Panc1 (cell line): ENCODE measurements at regions of chr2 and their contacts with region 1.

Region 1: DNA sequence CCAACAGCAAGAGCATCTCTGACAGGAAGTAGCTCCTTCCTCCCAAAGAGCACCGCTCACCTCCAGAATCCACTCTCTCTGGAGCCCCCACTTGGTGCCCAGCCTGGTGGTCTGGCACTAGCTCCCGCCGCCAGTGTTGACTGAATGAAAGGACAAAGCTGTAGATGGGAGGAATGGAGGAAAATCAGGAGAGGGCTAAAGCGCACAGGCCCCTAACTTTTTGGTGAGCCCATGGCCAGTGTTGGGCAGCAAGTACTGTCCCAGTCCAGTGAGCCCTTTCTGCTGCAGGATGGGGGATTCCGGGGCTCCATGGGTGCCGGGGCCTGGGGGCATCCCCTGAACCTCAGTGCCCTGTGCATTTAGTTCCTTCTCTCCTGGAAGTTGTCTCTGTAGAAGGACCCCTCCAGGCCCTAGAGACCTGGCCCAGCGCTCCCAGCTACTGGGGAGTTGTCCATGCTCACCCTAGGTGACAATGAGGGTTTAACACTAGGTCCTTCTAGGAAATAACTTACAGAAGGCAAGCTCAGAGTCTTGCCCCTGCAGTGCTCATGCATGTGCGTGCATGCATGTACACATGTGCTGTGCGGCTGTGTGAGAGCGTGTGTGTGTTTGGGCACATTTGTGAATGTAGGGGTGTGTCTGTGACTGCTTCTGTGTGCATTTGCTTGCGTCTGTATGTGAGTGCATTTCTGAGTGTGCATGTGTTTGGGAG is 33.6 kb downstream of the GLI2 start:
- DNase-seq: no peak
- ATAC-seq: no peak
- H3K4me3 ChIP-seq: no peak overlapping the region
- H3K27ac ChIP-seq: no peak overlapping the region
- H3K4me1 ChIP-seq: peaks cover 23% of the 10 kb centered on the region
- H3K27me3 ChIP-seq: no peaks in the 10 kb centered on the region
- CTCF ChIP-seq: no peak

Region 2: GRCh38 chr2:120740765-120741524 is 28.3 kb before region 1 on chr2:
- CTCF ChIA-PET with region 1: no interaction called
- POLR2A ChIA-PET with region 1: interaction called, 12 read pairs
- in situ Hi-C with region 1: no loop called
- intact Hi-C with region 1: no loop called
- DNase-seq: no peak
- ATAC-seq: peak; percentile 72
- H3K4me3 ChIP-seq: peak overlapping the region; percentile 46 to 63
- H3K27ac ChIP-seq: peak overlapping the region; percentile 87
- H3K4me1 ChIP-seq: peaks cover 35% of the 10 kb centered on the region
- H3K27me3 ChIP-seq: no peaks in the 10 kb centered on the region
- CTCF ChIP-seq: no peak